ENCODE measurements at regions of chr20 and their contacts with region 1.

Region 1: GRCh38 chr20:52305858-52306257 is 114.3 kb upstream of the ZFP64 start:
- DNase-seq: peak; percentile 49
- ATAC-seq: peak; percentile 87
- H3K4me3 Mint-ChIP-seq: no peak overlapping the region
- H3K27ac Mint-ChIP-seq: peak overlapping the region; percentile 45
- H3K4me1 Mint-ChIP-seq: peaks cover 56% of the 10 kb centered on the region
- H3K27me3 Mint-ChIP-seq: no peaks in the 10 kb centered on the region

Region 2: DNA sequence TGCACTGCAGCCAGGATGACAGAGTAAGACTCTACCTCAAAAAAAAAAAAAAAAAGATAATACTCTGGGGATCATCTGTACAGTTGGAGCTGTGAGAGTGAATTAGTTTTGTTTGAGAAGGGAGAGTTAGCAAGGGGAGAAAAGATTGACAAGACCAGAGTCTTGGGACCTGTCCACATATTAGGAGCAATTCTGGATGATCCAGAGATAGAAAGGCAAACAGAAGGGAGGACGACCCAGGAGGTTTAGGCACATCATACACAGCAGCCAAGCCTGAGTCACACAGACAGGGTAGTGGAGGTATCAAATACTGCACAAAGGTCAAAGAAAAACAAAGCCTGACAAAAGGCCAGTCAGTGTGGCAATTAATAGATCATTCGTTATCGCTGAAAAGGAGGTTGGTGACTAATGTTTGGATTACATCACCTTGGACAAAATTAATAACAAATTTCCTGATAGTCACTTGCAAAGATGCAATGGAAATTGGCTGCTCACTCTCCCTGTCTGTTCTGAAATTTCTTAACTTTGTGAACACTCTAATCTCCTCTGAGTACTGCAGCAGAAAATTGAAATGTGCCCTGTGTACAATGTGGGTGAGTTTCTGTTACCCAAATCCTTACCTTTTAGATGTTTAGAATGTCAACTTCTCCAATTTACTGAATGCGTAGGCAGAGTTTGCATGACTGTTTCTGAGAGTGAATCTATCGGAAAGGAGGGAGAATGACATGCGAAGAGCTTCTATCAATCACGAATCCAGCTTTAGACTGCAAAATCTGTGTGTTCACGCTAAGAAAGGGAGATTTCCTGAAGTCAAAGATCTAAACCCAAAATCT is 771.7 kb after region 1 on chr20:
- CTCF ChIA-PET with region 1: no interaction called
- POLR2A ChIA-PET with region 1: no interaction called
- intact Hi-C with region 1: loop called in 1 of 2 experiments (anchors 2 kb)
- DNase-seq: peak; percentile 56
- ATAC-seq: peak; percentile 80
- H3K4me3 Mint-ChIP-seq: no peak overlapping the region
- H3K27ac Mint-ChIP-seq: no peak overlapping the region
- H3K4me1 Mint-ChIP-seq: peaks cover 44% of the 10 kb centered on the region
- H3K27me3 Mint-ChIP-seq: peaks cover 3% of the 10 kb centered on the region

Measured in activated CD4-positive, alpha-beta T cell treated with anti-CD3 and anti-CD28 coated beads for 36 hours (primary cell).